Posterior cingulate gyrus (tissue), 11 donors: ENCODE measurements at regions of chr7 and their contacts with region 1.

Region 1: DNA sequence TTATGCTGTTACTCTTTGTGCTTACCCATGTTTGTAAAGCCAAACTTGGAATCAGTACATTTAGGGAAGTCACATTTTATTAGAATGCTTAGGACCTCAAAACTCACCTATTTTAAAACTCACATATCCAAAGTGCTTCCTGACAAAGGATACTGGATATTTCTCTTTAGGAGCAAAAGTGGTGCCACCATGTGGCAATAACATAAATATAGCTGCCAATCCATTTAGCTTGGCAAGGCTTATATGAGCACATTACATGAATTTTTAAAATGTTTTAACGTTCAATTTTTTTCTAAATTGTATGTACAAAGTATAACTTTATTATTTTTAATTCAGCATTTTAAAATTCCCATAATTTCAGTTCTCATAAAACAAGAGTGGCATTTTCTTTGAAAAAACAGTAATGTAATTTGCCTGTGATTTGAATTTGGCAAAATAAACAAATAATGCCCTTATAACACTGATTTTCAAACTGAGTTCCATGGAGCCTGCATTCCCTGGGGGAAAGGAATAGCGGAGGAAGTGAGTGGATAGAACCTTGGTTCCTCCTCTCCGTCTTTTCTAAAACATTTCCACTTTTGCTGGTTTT is 75.4 kb downstream of the HDAC9 start:
- DNase-seq: peak in 1 of 10 donors; percentile 28

Region 2: GRCh38 chr7:18352339-18353255 is 218.4 kb before region 1 on chr7:
- intact Hi-C with region 1: loop called (anchors 1 kb)
- DNase-seq: peak in 6 of 10 donors; percentile 9 to 67 (median 40)